ENCODE measurements at regions of chr1 and their contacts with region 1.

Region 1: GRCh38 chr1:220552672-220553260 is 24.8 kb downstream of the MARK1 start:
- DNase-seq: no peak
- H3K4me3 ChIP-seq: no peak overlapping the region
- H3K27ac ChIP-seq: no peak overlapping the region
- H3K4me1 ChIP-seq: no peaks in the 10 kb centered on the region
- H3K27me3 ChIP-seq: no peaks in the 10 kb centered on the region
- CTCF ChIP-seq: no peak
- EP300 ChIP-seq: no peak
- POLR2A ChIP-seq: no peak

Region 2: DNA sequence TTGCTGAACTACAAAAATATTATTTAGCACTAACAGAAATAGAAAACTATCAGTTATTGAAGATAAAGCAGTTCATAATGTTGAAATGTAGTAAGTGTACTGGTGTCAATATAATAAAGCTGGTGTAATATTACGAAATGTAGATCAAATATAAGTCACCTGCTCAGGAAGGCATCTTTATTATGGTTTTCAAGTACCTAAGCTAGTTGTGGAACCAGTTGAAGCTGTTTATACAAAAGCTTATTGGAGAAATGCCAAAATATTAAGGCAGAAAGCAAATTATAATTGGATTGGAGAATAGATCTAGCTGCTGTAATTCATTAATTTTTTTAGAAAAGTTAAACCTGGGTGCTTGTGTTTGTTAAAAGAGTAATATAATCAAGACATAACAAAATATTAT is 31.0 kb before region 1 on chr1:
- in situ Hi-C with region 1: no loop called
- intact Hi-C with region 1: loop called (anchors 1 kb)
- DNase-seq: no peak
- H3K4me3 ChIP-seq: no peak overlapping the region
- H3K27ac ChIP-seq: no peak overlapping the region
- H3K4me1 ChIP-seq: peaks cover 0 to 7% (median 3%) of the 10 kb centered on the region in 4 donors
- H3K27me3 ChIP-seq: no peaks in the 10 kb centered on the region
- CTCF ChIP-seq: no peak
- EP300 ChIP-seq: no peak
- POLR2A ChIP-seq: no peak

Region 3: DNA sequence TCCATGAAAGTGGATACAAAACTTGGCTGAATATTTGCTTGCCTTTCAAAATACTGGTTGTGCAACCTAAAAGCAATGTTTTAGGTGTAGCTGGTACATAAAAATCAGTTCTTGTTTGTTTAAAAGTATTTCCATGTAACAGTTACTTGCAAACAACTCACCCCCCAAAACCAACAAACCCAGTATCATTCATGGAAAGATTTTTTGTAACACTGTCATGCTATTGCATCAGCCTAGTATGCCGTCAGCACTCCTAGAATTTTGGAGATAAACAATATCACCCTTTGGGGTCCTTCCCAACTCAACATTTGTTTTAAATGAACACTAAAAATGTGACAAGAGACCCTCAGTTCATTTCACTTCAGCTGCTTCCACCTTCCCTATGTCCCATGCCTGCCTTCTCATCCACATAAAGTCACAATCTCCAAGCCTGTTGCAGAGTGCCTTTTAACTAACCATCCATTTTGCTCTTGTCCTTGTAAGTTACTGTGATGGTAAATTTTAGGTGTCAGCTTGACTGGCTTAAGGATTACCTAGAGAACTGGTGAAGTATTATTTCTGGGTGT is 763.8 kb after region 1 on chr1:
- in situ Hi-C with region 1: no loop called
- intact Hi-C with region 1: no loop called
- DNase-seq: no peak
- H3K4me3 ChIP-seq: no peak overlapping the region
- H3K27ac ChIP-seq: no peak overlapping the region
- H3K4me1 ChIP-seq: no peaks in the 10 kb centered on the region
- H3K27me3 ChIP-seq: no peaks in the 10 kb centered on the region
- CTCF ChIP-seq: no peak
- EP300 ChIP-seq: no peak
- POLR2A ChIP-seq: no peak